SK-N-SH (cell line): ENCODE measurements at regions of chr6 and their contacts with region 1.

Region 1: DNA sequence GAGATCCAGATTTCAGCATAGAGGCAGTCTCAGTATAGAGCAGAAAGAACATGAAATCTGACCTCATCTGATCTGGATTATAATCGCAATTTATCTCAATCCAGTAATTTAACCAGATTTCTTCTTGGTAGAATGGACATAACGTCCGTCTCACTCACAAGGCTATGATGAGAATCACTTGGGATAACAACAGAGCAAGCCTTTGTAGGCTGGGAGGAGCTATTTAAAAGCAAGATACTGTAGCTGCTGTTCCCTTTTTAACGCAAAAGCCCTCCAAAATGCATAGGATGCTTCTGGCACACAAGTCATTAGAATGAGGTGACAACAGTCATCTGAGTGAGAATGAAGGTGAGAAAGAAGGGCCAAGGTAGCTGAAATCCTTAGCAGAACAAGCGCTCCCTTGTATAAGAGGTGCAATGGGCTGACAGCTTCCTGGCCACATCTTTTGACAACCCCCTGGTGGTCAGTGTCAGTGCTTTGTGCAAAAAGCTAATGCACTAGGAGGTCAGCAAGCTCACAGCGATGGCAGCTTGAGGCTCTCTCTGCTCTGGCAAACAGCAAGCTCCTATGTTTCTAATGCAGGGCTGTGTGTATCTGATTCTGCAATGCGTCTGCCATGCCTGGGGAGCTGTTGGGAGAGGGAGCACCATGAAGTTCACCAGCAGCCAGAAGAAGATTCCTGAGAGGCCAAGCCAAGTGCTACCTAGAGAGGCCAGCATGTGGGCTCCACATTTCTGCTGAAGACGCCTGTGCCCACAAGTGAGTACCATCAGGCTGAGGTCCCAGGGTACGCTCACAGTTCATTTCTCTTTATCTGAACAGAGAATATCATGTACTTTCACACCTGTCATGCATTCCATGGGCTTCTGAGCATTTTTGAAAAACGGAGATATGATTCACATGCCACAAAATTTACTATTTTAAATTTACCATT is 16.2 kb downstream of the METTL24 start:
- DNase-seq: peak; percentile 66
- H3K4me3 ChIP-seq: no peak overlapping the region; a peak in 1 of 4 replicates
- H3K27ac ChIP-seq: no peak overlapping the region; a peak in 1 of 4 replicates
- H3K4me1 ChIP-seq: peaks cover 0 to 8% of the 10 kb centered on the region in 2 experiments; a peak in 2 of 4 replicates
- H3K27me3 ChIP-seq: no peaks in the 10 kb centered on the region
- CTCF ChIP-seq: peak; percentile 52
- EP300 ChIP-seq: no peak
- RAD21 ChIP-seq: peak; percentile 71

Region 2: GRCh38 chr6:110179401-110180227 is 162.3 kb before region 1 on chr6 and contains the start of gene WASF1:
- CTCF ChIA-PET with region 1: interaction called, 23 read pairs
- POLR2A ChIA-PET with region 1: no interaction called
- DNase-seq: peak; percentile 91
- H3K4me3 ChIP-seq: peak within 1 kb of the TSS; percentile 98 to 100
- H3K27ac ChIP-seq: peak within 1 kb of the TSS; percentile 94 to 99
- H3K4me1 ChIP-seq: peaks cover 11 to 40% of the 10 kb centered on the region in 2 experiments
- H3K27me3 ChIP-seq: no peaks in the 10 kb centered on the region
- CTCF ChIP-seq: no peak
- EP300 ChIP-seq: peak in 1 of 2 experiments; percentile 40; a peak in 1 of 4 replicates
- RAD21 ChIP-seq: no peak
- polyA plus RNA-seq, gene WASF1: 31.4 and 35.9 TPM in 2 replicates

Region 3: DNA sequence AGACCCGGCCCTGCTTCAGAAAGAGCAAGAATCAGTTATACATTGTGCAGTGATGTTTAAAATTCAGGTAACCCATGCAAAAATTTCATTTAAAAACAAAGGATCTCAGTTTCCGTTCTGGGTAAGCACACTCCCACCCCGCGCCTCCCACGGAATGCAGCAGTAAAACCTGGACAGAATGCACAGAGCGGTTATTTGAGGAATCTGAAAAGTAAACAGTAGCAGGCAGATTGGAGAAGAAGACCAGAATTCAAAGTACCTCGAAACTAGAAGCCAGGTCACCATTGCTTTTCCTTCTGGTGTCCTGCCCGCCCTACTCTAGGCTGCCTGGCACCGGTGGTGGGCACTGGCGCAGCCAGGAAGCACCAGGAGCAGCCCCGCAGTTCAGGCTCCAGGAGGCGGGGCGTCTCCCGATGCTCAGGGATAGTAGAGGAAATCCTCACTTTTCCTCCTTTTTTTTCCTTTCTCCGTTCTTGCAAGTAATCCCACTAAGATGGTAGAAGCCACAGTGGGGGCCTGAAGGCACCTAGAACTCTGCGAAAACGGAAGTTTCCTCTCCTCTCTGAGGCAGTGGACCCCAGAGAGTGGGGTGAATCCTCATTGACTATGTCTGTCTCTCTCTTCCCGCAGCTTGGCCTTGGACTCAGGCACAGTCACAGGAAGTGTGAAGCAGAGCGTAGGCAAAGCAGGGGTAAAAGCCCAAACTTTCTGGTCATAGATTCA is 12.1 kb before region 1 on chr6:
- CTCF ChIA-PET with region 1: interaction called, 14 read pairs
- POLR2A ChIA-PET with region 1: no interaction called
- DNase-seq: no peak
- H3K4me3 ChIP-seq: no peak overlapping the region
- H3K27ac ChIP-seq: peak overlapping the region in 1 of 2 experiments; percentile 85; a peak in 2 of 4 replicates
- H3K4me1 ChIP-seq: peaks cover 27 to 40% of the 10 kb centered on the region in 2 experiments; a peak in 3 of 4 replicates
- H3K27me3 ChIP-seq: no peaks in the 10 kb centered on the region
- CTCF ChIP-seq: no peak
- EP300 ChIP-seq: no peak
- RAD21 ChIP-seq: no peak

Region 4: GRCh38 chr6:110355727-110356126 is 13.8 kb after region 1 on chr6:
- CTCF ChIA-PET with region 1: interaction called, 11 read pairs
- POLR2A ChIA-PET with region 1: no interaction called
- DNase-seq: no peak
- H3K4me3 ChIP-seq: no peak overlapping the region
- H3K27ac ChIP-seq: no peak overlapping the region
- H3K4me1 ChIP-seq: peaks cover 3 to 11% of the 10 kb centered on the region in 2 experiments; a peak in 2 of 4 replicates
- H3K27me3 ChIP-seq: 0 out of 2 replicates have a peak, but pooled peaks cover 7% of the 10 kb centered on the region
- CTCF ChIP-seq: no peak
- EP300 ChIP-seq: no peak
- RAD21 ChIP-seq: no peak